WTC11 (cell line): ENCODE measurements at regions of chr12 and their contacts with region 1.

Region 1: DNA sequence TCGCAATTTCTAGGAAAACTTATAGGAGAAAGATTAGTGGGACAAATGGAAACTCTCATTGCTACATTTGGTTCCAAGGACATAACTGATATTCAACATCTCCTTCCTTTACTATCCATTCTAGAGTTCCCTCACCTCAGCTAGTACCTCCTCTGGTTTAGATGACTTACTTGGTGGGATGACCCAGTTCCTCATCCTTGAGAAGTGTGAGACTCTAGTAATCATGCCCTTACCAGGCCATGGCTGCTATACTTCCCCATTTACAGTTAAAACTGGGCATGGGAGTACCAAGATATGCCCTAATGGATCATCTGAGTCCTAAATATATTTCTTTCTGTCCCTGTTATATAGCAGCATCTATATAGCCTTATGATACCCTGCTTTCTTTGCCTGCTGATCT is 58.1 kb downstream of the IFT81 start:
- DNase-seq: no peak
- ATAC-seq: no peak
- H3K4me3 Mint-ChIP-seq: no peak overlapping the region
- H3K27ac Mint-ChIP-seq: no peak overlapping the region
- H3K4me1 Mint-ChIP-seq: no peaks in the 10 kb centered on the region
- H3K27me3 Mint-ChIP-seq: no peaks in the 10 kb centered on the region; the same call in 1 of the 2 replicates
- CTCF ChIP-seq: no peak

Region 2: GRCh38 chr12:110065540-110065939 is 116.7 kb before region 1 on chr12:
- CTCF ChIA-PET with region 1: no interaction called
- POLR2A ChIA-PET with region 1: interaction called, 15 read pairs
- DNase-seq: no peak
- ATAC-seq: no peak
- H3K4me3 Mint-ChIP-seq: no peak overlapping the region
- H3K27ac Mint-ChIP-seq: no peak overlapping the region
- H3K4me1 Mint-ChIP-seq: no peaks in the 10 kb centered on the region
- H3K27me3 Mint-ChIP-seq: peaks cover 10% of the 10 kb centered on the region
- CTCF ChIP-seq: no peak

Region 3: DNA sequence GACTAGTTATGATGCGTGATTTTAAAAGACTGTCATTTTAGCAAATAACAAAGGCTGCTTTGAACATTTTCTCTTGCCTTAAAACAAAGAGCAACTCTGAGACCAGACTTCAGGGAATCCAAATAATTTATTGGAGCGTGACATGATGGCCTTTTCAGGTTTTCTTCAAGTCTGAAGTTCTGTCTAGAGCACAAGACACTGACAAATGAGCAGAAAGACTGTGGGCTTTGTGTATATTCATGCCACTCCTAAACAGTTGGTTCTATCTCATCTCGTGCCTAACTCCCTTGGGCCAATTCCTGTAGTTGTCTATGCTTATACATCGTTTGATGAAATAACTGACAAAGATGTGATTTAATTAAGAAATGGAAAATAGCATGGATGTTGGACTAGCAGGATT is 10.6 kb before region 1 on chr12:
- CTCF ChIA-PET with region 1: no interaction called
- POLR2A ChIA-PET with region 1: no interaction called
- DNase-seq: no peak
- ATAC-seq: no peak
- H3K4me3 Mint-ChIP-seq: no peak overlapping the region
- H3K27ac Mint-ChIP-seq: no peak overlapping the region
- H3K4me1 Mint-ChIP-seq: no peaks in the 10 kb centered on the region
- H3K27me3 Mint-ChIP-seq: no peaks in the 10 kb centered on the region
- CTCF ChIP-seq: no peak